H1 (cell line): ENCODE measurements at regions of chr1 and their contacts with region 1.

Region 1: DNA sequence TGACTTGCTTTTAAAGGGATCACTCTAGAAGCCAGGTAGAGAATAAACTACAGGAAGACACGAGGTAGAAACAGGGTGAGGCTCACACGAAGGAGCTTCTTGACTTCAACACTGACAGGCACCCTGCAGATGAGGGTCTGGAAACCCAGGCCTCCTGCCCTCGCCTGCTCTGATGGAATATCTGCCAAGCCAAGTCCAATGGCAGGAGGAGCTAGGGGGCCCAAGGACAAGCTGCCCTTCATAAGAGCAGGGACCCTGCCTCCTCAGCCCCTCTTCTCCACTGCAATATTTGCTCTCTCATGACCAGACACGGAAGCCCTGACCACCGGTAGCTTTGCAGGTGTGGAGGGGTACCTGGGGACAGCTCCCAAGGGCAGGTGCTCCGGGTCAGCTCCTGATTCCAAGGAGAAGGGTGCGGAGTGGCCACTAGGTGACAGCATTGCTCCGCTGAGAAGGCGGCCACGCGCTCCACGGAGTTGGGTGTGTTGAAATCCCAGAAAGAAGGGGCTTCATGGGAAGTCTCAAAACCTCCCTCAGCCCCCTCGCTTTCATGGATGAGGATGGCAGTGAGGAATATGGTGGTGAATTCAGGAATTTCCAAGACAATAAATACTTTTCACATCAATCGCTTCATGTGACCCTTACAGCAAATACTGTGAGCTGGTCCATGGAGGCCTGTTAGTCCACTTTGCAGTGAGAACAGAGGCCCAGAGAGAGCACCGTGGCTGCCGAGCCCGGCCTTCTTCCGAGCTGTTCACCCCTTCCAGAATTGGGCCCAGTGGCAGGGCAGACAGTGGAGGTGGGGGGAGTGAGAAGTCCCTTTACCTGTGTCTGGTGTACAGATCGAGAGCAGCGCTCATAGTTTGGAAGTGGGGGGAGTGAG is 33.2 kb upstream of the PAX7 start:
- DNase-seq: peak; percentile 15 to 90
- H3K4me3 ChIP-seq: no peak overlapping the region
- H3K27ac ChIP-seq: no peak overlapping the region
- H3K4me1 ChIP-seq: peaks cover 0 to 2% (median under 1%) of the 10 kb centered on the region in 4 experiments; a peak in 1 of 7 replicates
- H3K27me3 ChIP-seq: peaks cover 0 to 11% (median 5%) of the 10 kb centered on the region in 4 experiments; a peak in 5 of 7 replicates
- CTCF ChIP-seq: peak; percentile 90 to 96 (median 95)
- EP300 ChIP-seq: no peak
- POLR2A ChIP-seq: no peak
- RAD21 ChIP-seq: peak; percentile 99 to 100

Region 2: DNA sequence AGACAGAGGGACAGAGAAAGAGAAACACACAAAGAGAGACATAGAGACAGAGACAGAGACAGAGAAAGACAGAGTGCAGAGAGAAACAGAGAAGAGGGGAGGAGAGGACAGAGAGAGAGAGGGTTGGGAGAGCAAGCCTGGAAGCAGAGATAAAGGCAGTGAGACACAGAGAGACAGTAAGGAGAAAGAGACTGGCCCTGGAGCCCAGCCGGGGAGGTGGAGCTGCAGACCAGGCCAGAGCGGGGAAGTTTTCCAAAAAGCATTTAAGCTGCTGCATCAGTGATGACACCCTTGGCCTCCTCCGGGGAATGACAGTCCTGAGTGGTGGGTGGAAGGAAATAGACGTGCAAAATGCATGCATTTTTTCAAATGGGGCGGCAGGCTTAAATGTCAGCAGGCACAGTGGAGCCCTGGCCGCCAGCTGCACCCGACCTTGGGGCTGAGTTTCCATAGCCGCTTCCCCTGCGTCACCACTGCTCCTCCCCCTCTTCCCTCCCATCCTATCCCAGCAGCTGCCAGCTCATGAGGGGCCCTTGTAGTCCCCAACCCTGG is 212.1 kb before region 1 on chr1:
- CTCF ChIA-PET with region 1: no interaction called
- POLR2A ChIA-PET with region 1: no interaction called
- DNase-seq: peak in 1 of 2 experiments; percentile 66
- H3K4me3 ChIP-seq: peak overlapping the region in 2 of 4 experiments; percentile 5 to 31; a peak in 2 of 8 replicates
- H3K27ac ChIP-seq: no peak overlapping the region
- H3K4me1 ChIP-seq: peaks cover 4 to 13% (median 11%) of the 10 kb centered on the region in 4 experiments
- H3K27me3 ChIP-seq: no peaks in the 10 kb centered on the region; a peak in 1 of 7 replicates
- CTCF ChIP-seq: no peak
- EP300 ChIP-seq: no peak
- POLR2A ChIP-seq: no peak
- RAD21 ChIP-seq: no peak

Region 3: GRCh38 chr1:18530587-18531502 is 66.6 kb before region 1 on chr1:
- CTCF ChIA-PET with region 1: no interaction called
- POLR2A ChIA-PET with region 1: no interaction called
- DNase-seq: peak in 1 of 2 experiments; percentile 48
- H3K4me3 ChIP-seq: no peak overlapping the region
- H3K27ac ChIP-seq: no peak overlapping the region
- H3K4me1 ChIP-seq: no peaks in the 10 kb centered on the region; a peak in 2 of 7 replicates
- H3K27me3 ChIP-seq: peaks cover 0 to 10% (median 3%) of the 10 kb centered on the region in 4 experiments; a peak in 5 of 7 replicates
- CTCF ChIP-seq: peak; percentile 52 to 68 (median 60)
- EP300 ChIP-seq: no peak
- POLR2A ChIP-seq: no peak
- RAD21 ChIP-seq: peak; percentile 69 to 79

Region 4: DNA sequence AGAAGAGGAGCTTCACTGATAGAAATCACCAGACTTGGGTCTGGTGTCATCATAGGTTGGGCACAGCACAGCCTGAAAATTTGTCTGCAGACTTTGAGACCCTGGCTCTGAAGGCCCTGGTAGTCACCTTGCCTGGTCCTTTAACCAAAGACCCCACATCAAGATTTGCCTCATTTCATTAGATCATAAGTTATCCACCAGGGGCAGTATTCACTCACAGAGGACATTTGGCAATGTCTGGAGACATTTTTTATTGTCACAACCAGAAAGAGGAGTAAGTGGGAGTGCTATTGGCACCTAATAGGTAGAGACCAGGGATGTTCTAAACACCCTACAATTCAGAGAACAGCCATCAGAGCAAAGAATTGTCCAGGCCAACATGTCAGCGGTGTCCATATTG is 11.1 kb after region 1 on chr1:
- CTCF ChIA-PET with region 1: interaction called, 14 read pairs
- POLR2A ChIA-PET with region 1: no interaction called
- DNase-seq: no peak
- H3K4me3 ChIP-seq: no peak overlapping the region
- H3K27ac ChIP-seq: no peak overlapping the region
- H3K4me1 ChIP-seq: peaks cover 0 to 5% (median 0%) of the 10 kb centered on the region in 4 experiments; a peak in 2 of 7 replicates
- H3K27me3 ChIP-seq: peaks cover 0 to 2% (median under 1%) of the 10 kb centered on the region in 4 experiments; a peak in 1 of 7 replicates
- CTCF ChIP-seq: peak in 2 of 3 experiments; percentile 38; a peak in 2 of 4 replicates
- EP300 ChIP-seq: no peak
- POLR2A ChIP-seq: no peak
- RAD21 ChIP-seq: peak; percentile 46 to 60

Region 5: DNA sequence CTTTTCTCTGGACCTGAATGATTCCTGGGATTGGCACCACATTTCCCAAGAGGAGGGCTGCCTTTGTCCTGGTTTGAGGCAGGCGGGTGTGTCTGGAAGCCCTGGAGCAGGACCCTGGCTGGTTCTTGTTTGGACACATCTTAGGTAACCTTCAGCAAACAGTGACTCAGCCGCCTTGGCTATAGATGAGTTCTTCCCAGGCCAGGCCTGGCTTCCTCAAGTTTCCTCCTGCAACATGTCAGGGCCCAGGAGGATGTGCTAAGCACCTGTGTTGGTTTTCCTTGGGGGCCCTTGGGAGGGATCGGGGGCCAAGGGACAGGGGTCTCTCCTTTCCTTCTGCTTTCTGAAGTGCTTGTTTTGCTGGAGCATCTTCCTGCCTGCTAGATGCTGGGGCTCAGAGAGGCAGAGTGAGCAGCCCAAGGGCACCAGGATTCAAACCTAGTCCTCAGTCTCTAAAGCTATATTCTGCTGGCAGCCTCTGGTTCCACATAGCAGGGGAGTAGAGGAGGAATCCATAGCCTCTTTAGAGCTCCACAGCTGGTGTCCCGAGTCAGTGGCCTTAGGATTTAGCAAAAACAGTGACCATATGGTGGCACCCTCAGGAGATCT is 71.5 kb after region 1 on chr1:
- CTCF ChIA-PET with region 1: interaction called, 44 read pairs
- POLR2A ChIA-PET with region 1: no interaction called
- DNase-seq: no peak
- H3K4me3 ChIP-seq: no peak overlapping the region
- H3K27ac ChIP-seq: no peak overlapping the region
- H3K4me1 ChIP-seq: peaks cover 0 to 5% (median 1%) of the 10 kb centered on the region in 4 experiments; a peak in 4 of 7 replicates
- H3K27me3 ChIP-seq: peaks cover 0 to 22% (median 10%) of the 10 kb centered on the region in 4 experiments; a peak in 3 of 7 replicates
- CTCF ChIP-seq: no peak
- EP300 ChIP-seq: no peak
- POLR2A ChIP-seq: no peak
- RAD21 ChIP-seq: no peak

Region 6: DNA sequence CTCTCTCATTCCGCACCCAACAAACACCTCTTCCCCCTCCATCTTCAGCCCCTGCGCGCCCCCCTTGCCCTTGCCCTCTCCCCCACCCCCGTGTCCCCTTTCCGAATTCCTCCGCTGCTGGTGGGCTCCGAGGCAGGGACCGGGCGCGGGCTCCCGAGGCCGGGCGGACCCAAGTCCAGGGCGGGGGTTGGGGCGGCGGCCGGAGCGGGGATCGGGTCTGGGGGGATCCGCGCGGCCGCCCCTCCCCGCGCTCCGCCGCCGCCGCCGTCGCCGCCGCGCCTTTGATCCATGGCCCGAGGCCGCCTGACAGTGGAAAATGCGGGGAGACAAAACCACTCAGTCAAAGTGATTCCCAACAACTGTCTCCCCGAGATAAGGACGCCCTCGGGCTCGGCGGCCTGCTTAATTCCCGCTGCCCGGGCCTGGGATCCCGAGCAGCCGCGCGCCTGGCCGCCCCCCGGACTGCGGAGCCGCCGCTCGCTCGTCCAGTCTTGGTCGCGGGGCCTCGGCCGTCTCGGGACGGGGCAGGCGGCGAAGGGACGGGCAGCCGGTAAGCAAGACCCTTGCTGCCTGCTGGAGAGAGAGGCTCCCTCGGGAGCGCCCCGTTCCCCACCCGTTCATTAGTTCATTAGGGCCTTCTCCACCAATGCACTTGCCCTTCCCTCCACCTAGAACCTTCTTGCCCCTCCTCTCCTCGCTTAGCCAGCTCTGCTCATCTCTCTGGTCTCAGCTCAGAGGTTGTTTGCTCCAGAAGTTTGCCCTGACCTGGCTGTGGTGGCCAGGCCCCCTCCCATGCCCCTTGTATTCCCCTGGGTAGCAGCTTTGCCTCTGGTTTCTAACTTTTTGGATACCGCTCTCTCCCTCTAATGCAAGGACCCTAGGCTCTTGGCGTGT is 119.6 kb after region 1 on chr1:
- CTCF ChIA-PET with region 1: interaction called, 36 read pairs
- POLR2A ChIA-PET with region 1: no interaction called
- DNase-seq: peak in 1 of 2 experiments; percentile 63
- H3K4me3 ChIP-seq: peak overlapping the region; percentile 19 to 71 (median 33)
- H3K27ac ChIP-seq: no peak overlapping the region
- H3K4me1 ChIP-seq: peaks cover 0 to 6% (median 1%) of the 10 kb centered on the region in 4 experiments; a peak in 3 of 7 replicates
- H3K27me3 ChIP-seq: peaks cover 23 to 56% (median 45%) of the 10 kb centered on the region in 4 experiments
- CTCF ChIP-seq: no peak
- EP300 ChIP-seq: no peak
- POLR2A ChIP-seq: no peak
- RAD21 ChIP-seq: no peak

Region 7: DNA sequence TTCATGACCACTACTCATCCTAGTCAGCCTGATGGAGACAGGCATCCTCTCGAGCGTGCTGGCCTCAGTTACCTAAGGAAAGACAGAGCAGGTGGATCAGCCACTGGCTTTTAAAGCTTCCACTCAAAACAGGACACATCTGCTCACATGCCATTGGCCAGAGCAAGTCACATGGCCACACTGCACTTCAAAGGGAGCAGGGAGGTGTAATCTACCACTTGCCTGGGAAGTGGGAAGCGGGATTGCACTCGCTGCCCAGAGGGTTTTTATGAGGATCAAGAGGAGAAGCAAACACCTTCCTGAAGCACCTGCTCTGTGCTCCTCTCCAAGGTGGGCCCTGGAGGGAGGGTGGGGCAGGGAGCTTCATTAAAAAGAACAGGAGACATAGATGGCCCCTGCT is 154.0 kb after region 1 on chr1:
- CTCF ChIA-PET with region 1: interaction called, 20 read pairs
- POLR2A ChIA-PET with region 1: no interaction called
- DNase-seq: no peak
- H3K4me3 ChIP-seq: no peak overlapping the region
- H3K27ac ChIP-seq: no peak overlapping the region
- H3K4me1 ChIP-seq: no peaks in the 10 kb centered on the region
- H3K27me3 ChIP-seq: peaks cover 0 to 16% (median 3%) of the 10 kb centered on the region in 4 experiments; a peak in 5 of 7 replicates
- CTCF ChIP-seq: no peak
- EP300 ChIP-seq: no peak
- POLR2A ChIP-seq: no peak
- RAD21 ChIP-seq: no peak

Region 8: DNA sequence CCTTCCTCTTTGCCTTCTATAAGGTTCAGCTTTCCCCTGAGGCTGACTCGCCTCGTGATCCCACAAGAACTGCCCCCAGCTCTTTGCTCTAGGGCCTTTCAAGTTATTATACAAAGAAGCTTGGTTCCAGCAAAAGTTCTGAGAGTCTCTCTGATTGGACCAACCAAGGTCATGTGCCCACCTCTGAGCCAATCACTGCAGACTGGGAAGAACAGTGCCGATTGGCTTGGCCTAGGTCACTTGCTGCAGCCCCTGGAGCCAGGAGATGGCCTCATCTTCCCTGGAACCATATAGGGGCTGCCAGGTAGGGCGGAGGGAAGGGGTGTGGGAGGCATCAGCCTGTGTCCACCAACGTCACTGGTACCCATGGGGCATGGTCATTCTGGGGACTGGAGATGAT is 239.3 kb after region 1 on chr1:
- CTCF ChIA-PET with region 1: interaction called, 12 read pairs
- POLR2A ChIA-PET with region 1: no interaction called
- DNase-seq: no peak
- H3K4me3 ChIP-seq: no peak overlapping the region
- H3K27ac ChIP-seq: no peak overlapping the region
- H3K4me1 ChIP-seq: no peaks in the 10 kb centered on the region
- H3K27me3 ChIP-seq: peaks cover 0 to 10% (median 2%) of the 10 kb centered on the region in 4 experiments; a peak in 3 of 7 replicates
- CTCF ChIP-seq: no peak
- EP300 ChIP-seq: no peak
- POLR2A ChIP-seq: no peak
- RAD21 ChIP-seq: no peak